Activated CD4-positive, alpha-beta memory T cell treated with anti-CD3 and anti-CD28 coated beads for 36 hours (primary cell): ENCODE measurements at regions of chr19 and their contacts with region 1.

Region 1: GRCh38 chr19:13839130-13839937 is 37.6 kb upstream of the NANOS3 start:
- DNase-seq: peak; percentile 96
- H3K4me3 Mint-ChIP-seq: peak overlapping the region; percentile 91
- H3K27ac Mint-ChIP-seq: peak overlapping the region; percentile 97
- H3K4me1 Mint-ChIP-seq: peaks cover 33% of the 10 kb centered on the region
- H3K27me3 Mint-ChIP-seq: no peaks in the 10 kb centered on the region

Region 2: GRCh38 chr19:13162518-13163314 is 676.6 kb before region 1 on chr19:
- CTCF ChIA-PET with region 1: interaction called, 5 read pairs
- POLR2A ChIA-PET with region 1: no interaction called
- intact Hi-C with region 1: loop called (anchors 5 kb)
- DNase-seq: peak; percentile 96
- H3K4me3 Mint-ChIP-seq: peak overlapping the region; percentile 87
- H3K27ac Mint-ChIP-seq: peak overlapping the region; percentile 99
- H3K4me1 Mint-ChIP-seq: peaks cover 60% of the 10 kb centered on the region
- H3K27me3 Mint-ChIP-seq: no peaks in the 10 kb centered on the region

Region 3: DNA sequence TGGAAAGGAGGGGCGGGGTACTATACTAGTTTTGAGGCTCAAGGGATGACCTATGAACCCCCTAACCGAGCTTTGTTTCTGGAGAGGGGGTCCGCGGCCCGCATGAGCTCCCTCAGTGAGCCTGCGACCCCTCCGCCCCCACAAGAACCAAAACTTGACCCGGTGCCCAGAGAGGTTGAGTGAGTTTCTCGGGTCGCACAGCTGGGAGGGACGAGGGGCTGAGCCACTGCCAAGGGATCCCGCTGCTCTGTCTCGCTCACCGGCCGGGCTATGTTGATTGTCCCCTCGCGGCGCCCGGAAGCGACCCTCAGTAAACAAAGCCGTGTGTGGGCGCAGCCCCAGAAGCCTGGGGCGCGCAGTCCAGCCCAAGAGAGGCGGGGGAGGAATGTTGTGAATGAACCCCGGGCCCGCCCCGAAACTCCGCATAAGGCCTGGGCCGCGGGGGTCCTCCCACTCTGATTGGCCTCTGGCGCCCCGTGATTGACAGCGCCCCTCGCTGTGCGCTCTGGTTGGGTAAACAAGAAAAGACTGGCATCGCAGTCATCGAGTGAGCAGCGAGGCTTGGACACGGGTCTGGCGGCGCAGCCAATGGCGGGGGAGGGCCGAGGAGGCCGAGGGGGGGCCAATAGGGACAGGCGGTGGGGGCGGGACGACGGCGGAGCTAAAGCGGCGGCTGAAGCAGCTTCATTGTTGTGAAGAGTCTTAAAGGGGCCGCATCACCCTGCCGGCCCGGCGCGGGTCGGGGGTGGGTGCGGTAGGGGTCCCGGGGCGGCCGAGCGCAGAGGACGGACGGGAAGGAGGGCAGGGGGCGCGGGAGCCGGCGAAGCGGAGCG is 44.4 kb before region 1 on chr19 and contains the start of gene ZSWIM4:
- CTCF ChIA-PET with region 1: interaction called, 4 read pairs
- POLR2A ChIA-PET with region 1: interaction called, 9 read pairs
- intact Hi-C with region 1: loop called (anchors 1 kb)
- DNase-seq: peak; percentile 99
- H3K4me3 Mint-ChIP-seq: peak within 1 kb of the TSS; percentile 95
- H3K27ac Mint-ChIP-seq: peak within 1 kb of the TSS; percentile 79
- H3K4me1 Mint-ChIP-seq: peaks cover 24% of the 10 kb centered on the region
- H3K27me3 Mint-ChIP-seq: no peaks in the 10 kb centered on the region
- total RNA-seq, gene ZSWIM4: 9.2 to 10.2 TPM

Region 4: GRCh38 chr19:13906910-13907309 is 67.6 kb after region 1 on chr19:
- CTCF ChIA-PET with region 1: no interaction called
- POLR2A ChIA-PET with region 1: no interaction called
- intact Hi-C with region 1: no loop called
- DNase-seq: no peak
- H3K4me3 Mint-ChIP-seq: peak overlapping the region; percentile 83
- H3K27ac Mint-ChIP-seq: no peak overlapping the region
- H3K4me1 Mint-ChIP-seq: peaks cover 23% of the 10 kb centered on the region
- H3K27me3 Mint-ChIP-seq: no peaks in the 10 kb centered on the region